ENCODE measurements at regions of chr16 and their contacts with region 1.

Region 1: DNA sequence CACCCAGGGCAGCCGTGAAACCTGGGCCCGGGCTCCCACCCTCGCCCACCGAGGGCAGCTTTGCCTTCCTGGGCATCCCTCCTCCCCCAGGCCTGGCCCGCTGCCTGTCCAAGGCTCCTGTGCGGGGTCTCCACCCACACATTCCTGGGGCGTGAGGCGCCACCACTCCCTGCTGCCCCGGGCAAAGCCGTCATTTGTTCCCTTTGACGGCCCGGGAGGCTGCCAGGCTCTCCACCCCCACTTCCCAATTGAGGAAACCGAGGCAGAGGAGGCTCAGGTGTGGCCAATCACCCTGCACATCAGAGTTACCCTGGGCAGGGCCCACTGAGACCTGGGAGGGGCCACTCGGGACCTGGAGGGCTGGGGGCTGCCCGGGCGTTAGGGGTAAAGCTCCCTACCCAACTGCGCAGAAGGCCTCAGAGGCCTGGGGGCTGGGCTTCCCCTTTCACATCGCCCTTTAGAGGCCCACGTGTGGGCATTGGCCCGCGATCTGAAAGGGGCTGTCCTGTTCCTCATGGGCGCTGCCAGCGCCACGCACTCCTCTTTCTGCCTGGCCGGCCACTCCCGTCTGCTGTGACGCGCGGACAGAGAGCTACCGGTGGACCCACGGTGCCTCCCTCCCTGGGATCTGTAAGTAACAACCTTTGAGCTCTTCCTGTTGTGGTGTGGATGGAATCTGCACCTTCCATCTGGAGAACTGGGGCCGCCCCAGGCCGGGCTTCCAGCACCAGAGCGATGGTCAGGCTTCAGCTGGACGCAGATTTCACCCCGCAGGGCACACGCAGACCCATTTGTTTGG is at the start of gene MSLN:
- DNase-seq: peak; percentile 67
- ATAC-seq: peak; percentile 81
- H3K4me3 ChIP-seq: peak within 1 kb of the TSS; percentile 78 to 95
- H3K27ac ChIP-seq: peak within 1 kb of the TSS; percentile 97
- H3K4me1 ChIP-seq: peaks cover 34 to 47% of the 10 kb centered on the region in 2 experiments
- H3K27me3 ChIP-seq: no peaks in the 10 kb centered on the region
- CTCF ChIP-seq: no peak
- POLR2A ChIP-seq: no peak
- RAD21 ChIP-seq: no peak
- total RNA-seq, gene MSLN: 40.9 TPM

Region 2: DNA sequence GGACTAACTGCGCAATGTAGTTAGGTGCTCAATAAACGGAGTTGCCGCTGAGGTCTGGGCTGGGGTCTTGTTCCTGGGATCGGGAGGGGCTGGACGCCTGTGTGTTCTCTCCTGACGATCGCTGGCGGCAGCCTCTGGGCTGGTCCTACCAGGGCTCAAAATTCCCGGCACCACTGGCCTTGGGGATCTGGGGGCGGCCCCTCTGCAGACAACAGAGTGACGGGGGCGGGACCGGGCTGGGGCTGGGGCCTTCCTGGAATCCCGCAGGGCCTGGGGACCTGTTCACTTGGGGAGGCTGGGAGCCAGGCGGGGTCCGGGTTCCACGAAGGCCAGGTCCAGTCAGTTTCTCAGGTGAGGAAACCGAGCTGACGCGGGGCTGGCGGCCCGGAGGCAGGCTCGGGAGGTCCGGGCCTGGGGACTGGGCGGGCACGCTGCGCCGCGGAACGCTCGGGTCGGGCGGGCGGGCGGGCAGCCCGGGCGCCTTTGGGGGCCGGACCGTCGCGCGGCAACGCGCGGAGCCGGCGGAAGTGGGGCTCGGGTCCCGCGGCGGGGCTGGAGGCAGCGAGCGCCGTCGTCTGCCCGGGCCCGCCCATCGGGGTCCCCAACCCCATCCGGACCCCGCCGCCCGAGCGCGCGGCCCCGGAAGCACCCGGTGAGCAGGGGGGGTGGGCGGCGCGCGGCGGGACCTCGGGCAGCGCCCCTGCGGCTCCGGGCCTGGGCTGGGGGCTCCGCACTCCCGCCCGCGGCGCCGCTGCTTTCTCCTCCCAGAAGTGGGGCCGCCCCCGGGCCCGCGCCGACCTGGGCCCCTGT is 191.1 kb before region 1 on chr16 and contains the start of gene PIGQ:
- CTCF ChIA-PET with region 1: no interaction called
- POLR2A ChIA-PET with region 1: no interaction called
- RAD21 ChIA-PET with region 1: no interaction called
- intact Hi-C with region 1: no loop called
- DNase-seq: no peak
- ATAC-seq: peak; percentile 80
- H3K4me3 ChIP-seq: peak within 1 kb of the TSS; percentile 58 to 70
- H3K27ac ChIP-seq: peak within 1 kb of the TSS; percentile 67
- H3K4me1 ChIP-seq: peaks cover 7 to 16% of the 10 kb centered on the region in 2 experiments
- H3K27me3 ChIP-seq: no peaks in the 10 kb centered on the region
- CTCF ChIP-seq: no peak
- POLR2A ChIP-seq: no peak
- RAD21 ChIP-seq: no peak
- total RNA-seq, gene PIGQ: 21.0 TPM

Region 3: GRCh38 chr16:720990-721764 is 39.6 kb before region 1 on chr16 and contains the start of gene ANTKMT:
- CTCF ChIA-PET with region 1: interaction called, 11 read pairs
- POLR2A ChIA-PET with region 1: interaction called, 12 read pairs
- RAD21 ChIA-PET with region 1: no interaction called
- intact Hi-C with region 1: no loop called
- DNase-seq: no peak
- ATAC-seq: peak; percentile 71
- H3K4me3 ChIP-seq: peak within 1 kb of the TSS; percentile 82 to 87
- H3K27ac ChIP-seq: peak within 1 kb of the TSS; percentile 100
- H3K4me1 ChIP-seq: peaks cover 33 to 68% of the 10 kb centered on the region in 2 experiments
- H3K27me3 ChIP-seq: no peaks in the 10 kb centered on the region
- CTCF ChIP-seq: no peak
- POLR2A ChIP-seq: peak; percentile 90
- RAD21 ChIP-seq: no peak
- total RNA-seq, gene ANTKMT: 65.4 TPM

Region 4: GRCh38 chr16:728131-728889 is 32.4 kb before region 1 on chr16:
- CTCF ChIA-PET with region 1: no interaction called
- POLR2A ChIA-PET with region 1: interaction called, 12 read pairs
- RAD21 ChIA-PET with region 1: no interaction called
- intact Hi-C with region 1: no loop called
- DNase-seq: peak; percentile 86
- ATAC-seq: peak; percentile 55
- H3K4me3 ChIP-seq: peak overlapping the region; percentile 80 to 89
- H3K27ac ChIP-seq: peak overlapping the region; percentile 96
- H3K4me1 ChIP-seq: peaks cover 5 to 31% of the 10 kb centered on the region in 2 experiments; a peak in 3 of 4 replicates
- H3K27me3 ChIP-seq: no peaks in the 10 kb centered on the region
- CTCF ChIP-seq: no peak
- POLR2A ChIP-seq: peak; percentile 71
- RAD21 ChIP-seq: no peak

Region 5: DNA sequence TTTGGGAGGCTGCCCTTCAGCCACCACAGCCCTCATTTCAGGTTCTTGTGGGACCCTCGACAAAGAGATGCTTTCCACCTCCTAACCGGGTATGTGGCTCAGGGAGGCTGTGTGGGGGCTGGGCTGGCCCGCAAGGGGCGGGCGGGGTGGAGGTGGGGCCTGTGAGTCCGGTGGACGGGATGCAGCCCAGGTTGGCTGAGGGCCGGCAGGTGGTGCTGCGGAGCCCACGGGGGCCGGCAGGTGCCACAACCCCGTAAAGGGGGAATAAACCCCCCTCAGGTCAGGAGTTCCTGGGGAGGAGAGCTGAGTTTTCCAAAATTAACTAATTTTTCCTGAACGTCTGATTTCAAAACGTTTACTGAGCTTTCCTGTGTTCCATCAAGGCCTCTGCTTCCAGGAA is 15.0 kb before region 1 on chr16:
- CTCF ChIA-PET with region 1: interaction called, 11 read pairs
- POLR2A ChIA-PET with region 1: interaction called, 6 read pairs
- RAD21 ChIA-PET with region 1: interaction called in 1 of 2 experiments, 5 read pairs
- intact Hi-C with region 1: no loop called
- DNase-seq: no peak
- ATAC-seq: peak; percentile 81
- H3K4me3 ChIP-seq: no peak overlapping the region
- H3K27ac ChIP-seq: no peak overlapping the region
- H3K4me1 ChIP-seq: peaks cover 2 to 18% of the 10 kb centered on the region in 2 experiments; a peak in 3 of 4 replicates
- H3K27me3 ChIP-seq: no peaks in the 10 kb centered on the region
- CTCF ChIP-seq: peak; percentile 52 to 76 (median 70)
- POLR2A ChIP-seq: no peak
- RAD21 ChIP-seq: peak; percentile 65

Region 6: GRCh38 chr16:772959-773358 is 12.2 kb after region 1 on chr16:
- CTCF ChIA-PET with region 1: no interaction called
- POLR2A ChIA-PET with region 1: interaction called, 3 read pairs
- RAD21 ChIA-PET with region 1: interaction called, 3 to 4 read pairs
- intact Hi-C with region 1: loop called (anchors 1 kb)
- DNase-seq: no peak
- ATAC-seq: peak; percentile 15
- H3K4me3 ChIP-seq: no peak overlapping the region
- H3K27ac ChIP-seq: peak overlapping the region; percentile 53
- H3K4me1 ChIP-seq: peaks cover 30 to 45% of the 10 kb centered on the region in 2 experiments
- H3K27me3 ChIP-seq: no peaks in the 10 kb centered on the region
- CTCF ChIP-seq: no peak
- POLR2A ChIP-seq: no peak
- RAD21 ChIP-seq: no peak

Region 7: GRCh38 chr16:813204-813915 is 52.6 kb after region 1 on chr16:
- CTCF ChIA-PET with region 1: no interaction called
- POLR2A ChIA-PET with region 1: no interaction called
- RAD21 ChIA-PET with region 1: no interaction called
- intact Hi-C with region 1: no loop called
- DNase-seq: no peak
- ATAC-seq: peak; percentile 75
- H3K4me3 ChIP-seq: no peak overlapping the region
- H3K27ac ChIP-seq: 0 out of 2 replicates have a peak overlapping the region, but pooled peaks have one; percentile 17
- H3K4me1 ChIP-seq: peaks cover 24 to 35% of the 10 kb centered on the region in 2 experiments
- H3K27me3 ChIP-seq: no peaks in the 10 kb centered on the region
- CTCF ChIP-seq: peak in 2 of 3 experiments; percentile 51 to 62; a peak in 5 of 6 replicates
- POLR2A ChIP-seq: no peak
- RAD21 ChIP-seq: peak; percentile 82

Region 8: DNA sequence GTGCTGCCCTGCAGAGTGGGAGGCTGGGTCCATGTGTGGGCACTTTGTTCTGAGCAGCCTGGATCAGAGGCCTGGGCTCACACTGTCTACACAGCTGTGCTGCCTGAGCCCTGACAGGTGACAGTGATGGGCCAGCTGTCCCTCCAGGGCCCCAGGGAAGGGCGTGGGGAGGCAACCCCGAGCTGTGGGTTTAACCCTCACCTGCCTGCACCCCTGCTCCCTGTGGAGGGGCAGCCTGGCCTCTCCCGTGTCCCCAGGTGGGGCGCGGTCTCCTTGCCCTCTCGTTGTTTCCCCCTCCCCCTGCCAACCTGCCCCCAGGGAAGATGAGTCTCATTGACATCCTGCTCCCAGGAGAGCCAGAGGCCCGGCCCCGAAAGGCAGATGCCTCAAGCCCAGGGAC is 79.3 kb after region 1 on chr16:
- CTCF ChIA-PET with region 1: no interaction called
- POLR2A ChIA-PET with region 1: no interaction called
- RAD21 ChIA-PET with region 1: no interaction called
- intact Hi-C with region 1: no loop called
- DNase-seq: no peak
- ATAC-seq: no peak
- H3K4me3 ChIP-seq: no peak overlapping the region
- H3K27ac ChIP-seq: no peak overlapping the region
- H3K4me1 ChIP-seq: no peaks in the 10 kb centered on the region
- H3K27me3 ChIP-seq: no peaks in the 10 kb centered on the region
- CTCF ChIP-seq: no peak
- POLR2A ChIP-seq: no peak
- RAD21 ChIP-seq: no peak

Measured in HCT116 (cell line).